Posterior vena cava (tissue), 2 donors: ENCODE measurements at regions of chr4 and their contacts with region 1.

Region 1: GRCh38 chr4:81844717-81845116 is 373.0 kb upstream of the RASGEF1B start:
- DNase-seq: peak; percentile 85

Region 2: GRCh38 chr4:81460191-81460701 is 384.5 kb before region 1 on chr4:
- intact Hi-C with region 1: loop called (anchors 5 to 10 kb)
- DNase-seq: no peak

Region 3: GRCh38 chr4:81466841-81467671 is 377.7 kb before region 1 on chr4:
- intact Hi-C with region 1: loop called (anchors 5 to 10 kb)
- DNase-seq: no peak

Region 4: DNA sequence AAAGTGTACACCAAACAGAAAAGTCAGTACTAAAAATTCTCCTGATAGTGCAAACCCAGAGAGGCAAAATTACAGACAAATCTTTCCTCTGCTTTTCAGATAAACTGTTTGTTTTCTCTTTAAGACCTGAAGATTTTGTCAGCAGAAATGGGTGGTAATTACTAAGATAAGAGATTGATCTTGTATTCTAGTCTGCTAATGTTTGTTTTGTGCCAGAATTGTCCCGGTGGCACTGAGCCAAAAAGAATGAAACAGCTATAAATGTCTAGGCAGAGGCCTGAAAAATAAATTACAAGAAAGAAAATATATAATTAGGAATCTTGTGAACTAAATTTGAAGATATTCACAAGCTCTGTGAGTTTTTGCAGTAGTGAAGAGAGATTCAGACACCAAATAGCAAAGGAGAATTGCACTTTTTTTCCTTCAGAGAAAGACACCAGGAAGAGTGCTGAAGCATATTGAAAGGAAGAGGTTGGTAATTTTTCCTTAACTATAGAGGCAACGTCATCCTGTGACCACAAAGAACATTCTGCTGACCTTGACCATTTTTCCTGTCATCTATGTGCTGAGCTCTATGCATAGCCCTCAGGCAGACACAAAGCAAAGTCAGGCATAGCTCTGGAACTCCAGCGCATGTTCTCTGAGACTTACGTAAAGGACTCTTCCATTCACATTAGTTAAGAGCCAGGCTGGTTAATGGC is 58.5 kb before region 1 on chr4:
- intact Hi-C with region 1: no loop called
- DNase-seq: no peak